Right ventricle myocardium inferior (tissue), 1 donor: ENCODE measurements at regions of chr20 and their contacts with region 1.

Region 1: GRCh38 chr20:59149651-59150504 is 13.7 kb upstream of the ZNF831 start:
- DNase-seq: peak; percentile 66
- ATAC-seq: no peak

Region 2: GRCh38 chr20:58993332-58994201 is 156.3 kb before region 1 on chr20:
- intact Hi-C with region 1: no loop called
- DNase-seq: no peak
- ATAC-seq: no peak

Region 3: DNA sequence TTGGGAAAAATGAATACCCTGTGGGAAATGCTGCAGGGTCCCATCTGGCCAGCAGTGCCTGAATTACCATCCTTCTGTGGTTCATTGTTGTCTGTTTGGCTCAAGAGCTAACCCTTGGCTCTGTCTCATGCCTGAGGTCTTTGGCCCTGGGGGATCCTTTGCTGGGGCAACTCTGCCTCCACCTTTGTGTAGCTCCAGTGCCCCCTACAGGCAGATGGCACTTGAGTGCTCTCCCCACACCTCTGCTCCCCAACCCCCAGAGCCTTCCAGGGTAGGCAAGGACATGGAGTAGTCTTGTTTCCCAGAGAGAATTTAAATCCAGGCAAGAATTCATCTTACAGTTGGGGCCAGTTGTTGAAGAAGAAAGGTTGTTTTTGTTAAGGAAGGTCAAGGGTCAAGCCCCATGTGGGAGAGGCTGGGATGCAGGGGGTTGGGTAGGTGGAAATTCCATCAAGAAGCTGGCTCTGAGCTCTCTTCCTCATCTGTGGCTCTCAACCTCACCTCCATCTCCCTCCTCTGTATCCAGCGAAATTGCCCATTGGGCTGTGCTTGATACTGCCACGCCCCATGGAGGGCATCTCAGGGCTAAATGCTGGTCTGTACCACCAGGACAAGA is 58.0 kb after region 1 on chr20:
- intact Hi-C with region 1: loop called (anchors 5 kb)
- DNase-seq: peak; percentile 75
- ATAC-seq: peak; percentile 70